ENCODE measurements at regions of chr19 and their contacts with region 1.

Region 1: GRCh38 chr19:39738814-39739213 is 985 bp upstream of the CLC start:
- DNase-seq: no peak
- H3K4me3 Mint-ChIP-seq: no peak overlapping the region
- H3K27ac Mint-ChIP-seq: no peak overlapping the region
- H3K4me1 Mint-ChIP-seq: peaks cover 37% of the 10 kb centered on the region
- H3K27me3 Mint-ChIP-seq: no peaks in the 10 kb centered on the region

Region 2: GRCh38 chr19:39582891-39583625 is 155.8 kb before region 1 on chr19:
- CTCF ChIA-PET with region 1: no interaction called
- intact Hi-C with region 1: loop called (anchors 5 kb)
- DNase-seq: peak; percentile 40
- H3K4me3 Mint-ChIP-seq: no peak overlapping the region
- H3K27ac Mint-ChIP-seq: no peak overlapping the region
- H3K4me1 Mint-ChIP-seq: no peaks in the 10 kb centered on the region
- H3K27me3 Mint-ChIP-seq: peaks cover 10% of the 10 kb centered on the region

Region 3: DNA sequence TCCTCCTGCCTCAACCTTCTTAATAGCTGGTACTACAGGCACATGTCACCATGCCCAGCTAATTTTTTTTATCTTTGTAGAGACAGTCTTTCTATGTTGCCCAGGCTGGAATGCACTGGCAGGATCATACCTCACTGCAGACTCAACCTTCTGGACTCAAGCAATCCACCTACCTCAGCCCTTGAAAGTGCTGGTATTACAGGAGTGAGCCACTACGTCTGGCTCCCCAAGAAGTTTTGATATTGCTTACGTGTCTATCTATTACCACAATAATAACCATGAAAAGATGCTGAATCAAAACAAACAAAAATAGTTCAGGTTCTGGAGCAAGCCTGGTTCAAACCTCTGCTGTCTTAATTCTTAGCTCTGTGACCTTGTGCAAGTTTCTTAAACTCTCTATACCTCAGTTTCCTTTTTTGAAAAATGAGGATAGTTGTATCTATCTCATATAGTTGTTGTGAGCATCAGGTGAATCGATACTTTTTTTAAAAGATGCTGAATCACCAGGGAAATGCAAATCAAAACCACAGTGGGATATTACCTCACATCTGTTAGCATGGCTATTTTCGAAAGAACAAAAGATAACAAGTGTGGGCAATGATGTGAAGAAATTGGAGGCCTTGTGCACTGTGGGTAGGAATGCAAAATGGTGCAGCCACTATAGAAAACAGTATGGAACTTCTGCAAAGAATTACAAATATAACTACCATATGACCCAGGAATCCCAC is 20.8 kb after region 1 on chr19:
- CTCF ChIA-PET with region 1: no interaction called
- intact Hi-C with region 1: no loop called
- DNase-seq: no peak
- H3K4me3 Mint-ChIP-seq: no peak overlapping the region
- H3K27ac Mint-ChIP-seq: no peak overlapping the region
- H3K4me1 Mint-ChIP-seq: no peaks in the 10 kb centered on the region
- H3K27me3 Mint-ChIP-seq: peaks cover 9% of the 10 kb centered on the region

Region 4: DNA sequence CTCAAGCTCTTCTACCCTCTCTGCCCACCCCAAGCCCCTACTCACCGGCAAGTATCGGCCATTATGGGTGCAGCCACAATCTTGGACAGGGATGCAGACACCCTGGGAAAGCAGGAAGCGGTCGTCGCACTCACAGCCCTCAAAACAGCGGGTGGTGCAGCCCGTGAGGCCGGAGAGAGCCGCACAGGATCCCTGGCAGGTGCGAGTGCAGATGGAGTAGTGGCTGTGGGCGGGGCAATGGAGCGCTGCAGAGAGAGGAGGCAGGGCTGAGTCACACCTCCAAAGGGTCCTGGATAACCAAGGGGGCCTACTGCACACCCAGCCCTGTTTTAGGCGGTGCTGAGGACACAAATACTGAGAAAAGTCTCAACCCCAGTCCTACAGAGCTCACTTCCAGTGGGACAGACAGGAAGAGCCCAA is 131.4 kb after region 1 on chr19:
- CTCF ChIA-PET with region 1: no interaction called
- intact Hi-C with region 1: no loop called
- DNase-seq: no peak
- H3K4me3 Mint-ChIP-seq: no peak overlapping the region
- H3K27ac Mint-ChIP-seq: no peak overlapping the region
- H3K4me1 Mint-ChIP-seq: no peaks in the 10 kb centered on the region
- H3K27me3 Mint-ChIP-seq: no peaks in the 10 kb centered on the region

Region 5: DNA sequence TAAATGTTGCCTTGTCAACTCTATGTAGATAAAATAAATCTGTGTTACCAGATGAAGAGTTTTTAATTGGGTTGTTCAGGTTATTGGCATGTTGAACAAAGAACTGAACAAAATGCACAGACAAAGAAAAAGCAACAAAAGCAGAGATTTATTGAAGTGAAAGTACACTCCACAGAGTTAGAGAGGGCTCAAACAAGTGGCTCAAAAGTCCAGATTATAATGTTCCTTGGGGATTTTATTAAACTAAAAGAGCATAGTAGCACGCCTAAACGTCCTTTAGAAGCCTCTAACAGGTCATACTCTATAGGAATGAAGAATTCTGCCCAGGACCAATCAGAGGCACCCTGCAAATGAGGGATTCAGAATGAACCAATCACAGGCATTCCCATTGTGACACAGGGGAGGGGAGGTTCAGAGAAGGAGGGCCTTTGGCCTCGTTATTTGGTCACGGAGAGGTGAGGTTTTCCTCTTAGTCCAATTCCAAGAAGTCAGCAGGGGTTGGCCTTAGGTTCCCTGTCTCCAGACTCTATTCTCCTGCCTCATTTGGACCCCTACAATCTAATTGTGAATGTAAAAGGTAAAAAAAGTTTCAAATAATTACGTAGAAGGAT is 245.0 kb after region 1 on chr19:
- CTCF ChIA-PET with region 1: no interaction called
- intact Hi-C with region 1: no loop called
- DNase-seq: no peak
- H3K4me3 Mint-ChIP-seq: no peak overlapping the region
- H3K27ac Mint-ChIP-seq: no peak overlapping the region
- H3K4me1 Mint-ChIP-seq: peaks cover 6% of the 10 kb centered on the region
- H3K27me3 Mint-ChIP-seq: no peaks in the 10 kb centered on the region

Measured in activated naive CD4-positive, alpha-beta T cell treated with anti-CD3 and anti-CD28 coated beads for 36 hours (primary cell).